Activated CD8-positive, alpha-beta T cell treated with anti-CD3 and anti-CD28 coated beads, Interleukin-2, amount 10 ng/mL, durations not matched to agents 7 days and 5 days (primary cell): ENCODE measurements at regions of chr17 and their contacts with region 1.

Region 1: GRCh38 chr17:7589204-7589868 is 558 bp downstream of the SOX15 start:
- DNase-seq: peak; percentile 74
- ATAC-seq: peak; percentile 75
- H3K4me3 Mint-ChIP-seq: no peak overlapping the region
- H3K27ac Mint-ChIP-seq: no peak overlapping the region
- H3K4me1 Mint-ChIP-seq: peaks cover 20% of the 10 kb centered on the region
- H3K27me3 Mint-ChIP-seq: no peaks in the 10 kb centered on the region

Region 2: DNA sequence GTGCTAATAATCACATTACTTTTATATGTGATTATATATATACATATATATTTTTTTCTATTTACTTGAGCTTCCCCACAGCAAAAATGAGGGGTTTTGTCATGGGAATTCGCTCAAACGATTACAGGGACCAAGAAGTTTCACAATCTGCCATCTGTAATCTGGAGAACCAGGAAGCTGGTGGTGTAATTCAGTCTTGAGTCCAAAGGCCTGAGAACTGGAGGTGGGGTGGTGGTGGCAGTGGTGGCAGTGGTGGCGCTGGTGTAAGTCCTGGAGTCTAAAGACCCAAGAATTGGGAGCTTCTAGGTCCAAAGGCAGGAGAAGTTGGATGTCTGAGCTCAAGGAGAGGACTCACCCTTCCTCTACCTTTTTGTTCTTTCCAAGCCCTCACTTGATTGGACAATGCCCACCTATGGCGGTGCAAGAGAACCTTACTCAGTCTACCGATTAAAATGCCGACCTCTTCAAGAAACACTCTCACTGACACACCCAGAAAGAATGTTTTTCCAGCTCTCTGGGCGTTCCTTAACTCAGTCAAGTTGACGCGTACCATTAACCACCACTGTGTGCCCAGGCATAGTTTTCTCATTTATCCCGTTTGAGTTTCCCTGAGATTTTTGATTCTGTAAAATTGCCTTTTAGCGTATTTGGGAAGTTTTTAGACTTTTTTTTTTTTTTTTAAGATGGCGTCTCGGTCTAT is 73.3 kb before region 1 on chr17:
- CTCF ChIA-PET with region 1: interaction called, 22 read pairs
- POLR2A ChIA-PET with region 1: interaction called, 4 read pairs
- DNase-seq: no peak
- ATAC-seq: no peak
- H3K4me3 Mint-ChIP-seq: no peak overlapping the region
- H3K27ac Mint-ChIP-seq: no peak overlapping the region
- H3K4me1 Mint-ChIP-seq: peaks cover 4% of the 10 kb centered on the region
- H3K27me3 Mint-ChIP-seq: no peaks in the 10 kb centered on the region

Region 3: GRCh38 chr17:7572588-7573323 is 16.6 kb before region 1 on chr17:
- CTCF ChIA-PET with region 1: interaction called, 12 read pairs
- POLR2A ChIA-PET with region 1: interaction called, 105 read pairs
- DNase-seq: no peak
- ATAC-seq: peak; percentile 13
- H3K4me3 Mint-ChIP-seq: peak overlapping the region; percentile 93
- H3K27ac Mint-ChIP-seq: peak overlapping the region; percentile 100
- H3K4me1 Mint-ChIP-seq: peaks cover 62% of the 10 kb centered on the region
- H3K27me3 Mint-ChIP-seq: no peaks in the 10 kb centered on the region

Region 4: GRCh38 chr17:7606280-7606679 is 16.9 kb after region 1 on chr17:
- CTCF ChIA-PET with region 1: interaction called, 10 read pairs
- POLR2A ChIA-PET with region 1: no interaction called
- DNase-seq: no peak
- ATAC-seq: no peak
- H3K4me3 Mint-ChIP-seq: no peak overlapping the region
- H3K27ac Mint-ChIP-seq: no peak overlapping the region
- H3K4me1 Mint-ChIP-seq: no peaks in the 10 kb centered on the region
- H3K27me3 Mint-ChIP-seq: no peaks in the 10 kb centered on the region

Region 5: DNA sequence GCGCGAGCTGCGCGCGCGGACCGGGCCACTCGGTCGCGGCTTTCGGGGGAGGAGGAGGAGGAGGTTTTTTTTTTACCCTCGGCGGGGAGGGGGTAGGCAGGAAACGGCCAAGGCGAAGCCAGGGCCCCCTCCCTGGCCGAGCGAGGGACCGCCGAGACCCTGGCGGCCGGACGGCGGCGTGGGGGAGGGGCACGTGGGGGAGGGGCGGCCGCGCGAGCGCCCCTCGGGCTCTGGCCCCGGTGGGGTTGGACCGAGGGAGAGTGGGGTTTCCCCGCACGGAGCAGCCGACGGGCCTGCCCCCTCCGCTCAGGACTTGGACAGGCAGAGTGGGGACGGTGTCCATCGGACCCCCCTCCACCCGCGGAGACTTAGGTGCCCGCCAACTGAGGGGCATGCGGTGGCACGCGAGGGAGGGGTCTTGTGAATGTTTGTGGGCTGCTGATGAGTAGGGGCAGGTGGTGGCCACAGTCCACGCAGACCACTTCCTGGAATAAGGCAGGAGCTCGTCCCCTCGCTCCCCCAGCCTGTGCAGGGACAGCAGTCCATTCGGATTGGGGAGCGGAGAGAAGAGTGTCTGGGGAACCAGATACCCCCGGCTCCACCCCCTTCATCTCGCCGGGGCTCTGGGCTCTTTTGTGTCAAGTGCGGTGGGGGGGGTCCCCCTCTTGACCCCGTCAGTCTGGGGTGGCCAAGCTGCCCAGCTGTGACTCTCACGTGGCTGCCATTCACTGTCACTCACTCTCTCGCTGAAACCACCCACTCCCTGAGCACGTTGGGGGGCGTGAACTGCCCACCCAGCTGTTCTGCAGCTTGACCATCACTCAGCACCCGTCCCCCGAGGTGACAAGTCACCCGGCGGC is 296.3 kb after region 1 on chr17:
- CTCF ChIA-PET with region 1: no interaction called
- POLR2A ChIA-PET with region 1: no interaction called
- DNase-seq: peak; percentile 60
- ATAC-seq: peak; percentile 8
- H3K4me3 Mint-ChIP-seq: peak overlapping the region; percentile 61
- H3K27ac Mint-ChIP-seq: peak overlapping the region; percentile 61
- H3K4me1 Mint-ChIP-seq: peaks cover 3% of the 10 kb centered on the region
- H3K27me3 Mint-ChIP-seq: no peaks in the 10 kb centered on the region